Heart left ventricle (tissue), 16 donors: ENCODE measurements at regions of chr7 and their contacts with region 1.

Region 1: GRCh38 chr7:30800785-30801252 is 29.6 kb downstream of the MINDY4 start:
- DNase-seq: peak in 4 of 5 donors; percentile 46 to 74 (median 61)
- ATAC-seq: peak; percentile 47 to 73 (median 72)
- H3K4me3 ChIP-seq: no peak overlapping the region
- H3K27ac ChIP-seq: peak overlapping the region in 8 of 12 donors; percentile 15 to 62 (median 44)
- H3K4me1 ChIP-seq: peaks cover 0 to 74% (median 45%) of the 10 kb centered on the region in 12 donors
- H3K27me3 ChIP-seq: no peaks in the 10 kb centered on the region
- CTCF ChIP-seq: peak; percentile 47 to 84 (median 76)
- POLR2A ChIP-seq: no peak

Region 2: GRCh38 chr7:30938435-30939316 is 137.9 kb after region 1 on chr7:
- intact Hi-C with region 1: loop called in 3 of 10 experiments (anchors 5 to 10 kb)
- DNase-seq: peak; percentile 81 to 92 (median 85)
- ATAC-seq: peak; percentile 72 to 90 (median 85)
- H3K4me3 ChIP-seq: peak overlapping the region in 7 of 12 donors; percentile 7 to 39 (median 31)
- H3K27ac ChIP-seq: no peak overlapping the region
- H3K4me1 ChIP-seq: peaks cover 0 to 31% (median 12%) of the 10 kb centered on the region in 12 donors
- H3K27me3 ChIP-seq: no peaks in the 10 kb centered on the region
- CTCF ChIP-seq: peak; percentile 95 to 100 (median 98)
- POLR2A ChIP-seq: no peak

Region 3: DNA sequence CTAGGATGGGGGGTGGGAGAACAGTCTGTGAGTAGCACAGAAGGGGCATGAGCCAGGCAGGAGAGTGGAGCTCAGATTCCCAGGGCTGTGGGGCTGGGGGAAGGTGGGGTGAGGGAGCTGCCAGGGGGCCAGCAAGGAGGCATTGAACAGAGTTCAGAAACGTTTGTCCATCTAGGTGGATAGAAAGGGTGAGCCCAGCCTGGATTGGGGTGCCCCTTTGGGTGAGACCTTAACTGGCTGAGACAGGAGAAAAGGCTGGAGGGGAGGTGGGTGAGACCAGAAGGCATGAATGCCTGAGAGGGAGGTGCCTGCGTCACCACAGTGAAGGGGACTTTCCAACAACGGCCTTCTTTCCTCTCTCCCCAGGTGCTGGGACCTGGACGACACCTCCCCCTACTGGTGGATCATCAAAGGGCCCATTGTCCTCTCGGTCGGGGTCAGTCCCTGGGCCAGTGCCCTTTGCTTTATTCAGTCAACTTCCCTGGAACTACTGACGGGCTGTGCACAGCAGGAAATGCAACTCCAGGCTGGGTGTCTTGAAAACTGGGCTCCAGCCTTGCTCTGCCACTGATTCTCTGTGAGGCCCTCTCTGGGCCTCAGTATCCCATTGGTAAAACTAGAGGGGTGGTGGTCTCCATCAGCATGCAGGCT is 173.9 kb after region 1 on chr7:
- intact Hi-C with region 1: loop called (anchors 1 to 2 kb)
- DNase-seq: peak in 3 of 5 donors; percentile 56 to 69 (median 60)
- ATAC-seq: peak; percentile 62 to 85 (median 78)
- H3K4me3 ChIP-seq: no peak overlapping the region
- H3K27ac ChIP-seq: no peak overlapping the region
- H3K4me1 ChIP-seq: peaks cover 0 to 19% (median 1%) of the 10 kb centered on the region in 12 donors
- H3K27me3 ChIP-seq: peaks cover 0 to 4% (median 0%) of the 10 kb centered on the region in 9 donors
- CTCF ChIP-seq: peak; percentile 68 to 85 (median 78)
- POLR2A ChIP-seq: no peak

Region 4: GRCh38 chr7:30983042-30983913 is 182.5 kb after region 1 on chr7:
- intact Hi-C with region 1: loop called in 1 of 10 experiments (anchors 2 kb)
- DNase-seq: peak; percentile 78 to 90 (median 83)
- ATAC-seq: peak; percentile 27 to 93 (median 86)
- H3K4me3 ChIP-seq: no peak overlapping the region
- H3K27ac ChIP-seq: no peak overlapping the region
- H3K4me1 ChIP-seq: peaks cover 0 to 13% (median 5%) of the 10 kb centered on the region in 12 donors
- H3K27me3 ChIP-seq: peaks cover 0 to 11% (median 0%) of the 10 kb centered on the region in 9 donors
- CTCF ChIP-seq: peak; percentile 79 to 98 (median 94)
- POLR2A ChIP-seq: no peak

Region 5: GRCh38 chr7:31122649-31123058 is 321.8 kb after region 1 on chr7:
- intact Hi-C with region 1: loop called (anchors 1 to 5 kb)
- DNase-seq: peak in 4 of 5 donors; percentile 50 to 66 (median 57)
- ATAC-seq: peak; percentile 40 to 82 (median 79)
- H3K4me3 ChIP-seq: no peak overlapping the region
- H3K27ac ChIP-seq: no peak overlapping the region
- H3K4me1 ChIP-seq: peaks cover 0 to 5% (median 0%) of the 10 kb centered on the region in 12 donors
- H3K27me3 ChIP-seq: no peaks in the 10 kb centered on the region
- CTCF ChIP-seq: peak; percentile 72 to 94 (median 86)
- POLR2A ChIP-seq: no peak